ENCODE measurements at regions of chr10 and their contacts with region 1.

Region 1: DNA sequence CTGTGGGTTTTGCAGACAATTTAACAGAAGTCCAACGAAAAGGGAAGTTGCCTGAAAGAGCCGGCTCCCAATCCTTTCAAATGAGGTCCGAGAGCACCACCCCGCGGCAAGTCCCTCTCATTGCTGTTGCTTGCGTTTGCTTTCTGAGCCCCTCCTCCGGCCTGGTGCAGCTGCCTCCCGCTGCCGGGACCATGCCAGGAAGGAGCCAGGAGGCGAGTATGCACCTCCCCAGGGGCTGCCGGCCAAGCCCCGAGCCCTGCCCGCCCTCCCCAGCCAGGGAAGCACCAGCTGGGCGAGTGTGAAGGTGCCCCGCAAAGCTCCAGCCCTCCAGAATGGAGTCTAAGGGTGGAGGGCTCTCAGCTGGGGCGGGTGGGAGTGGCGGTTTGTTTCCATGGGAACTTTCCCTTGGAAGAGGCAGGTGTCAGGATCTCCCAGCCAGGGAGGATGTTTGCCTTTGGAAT is 25.8 kb upstream of the PPP2R2D start:
- ATAC-seq: peak; percentile 76 to 91 (median 88)
- H3K4me3 ChIP-seq: peak overlapping the region in 2 of 5 donors; percentile 13 to 19
- H3K27ac ChIP-seq: no peak overlapping the region
- H3K4me1 ChIP-seq: peaks cover 2 to 8% of the 10 kb centered on the region in 2 donors

Region 2: GRCh38 chr10:130190055-130190736 is 1684.8 kb before region 1 on chr10:
- in situ Hi-C with region 1: loop called in 6 of 9 experiments (anchors 25 kb)
- ATAC-seq: peak; percentile 80 to 93 (median 91)
- H3K4me3 ChIP-seq: peak overlapping the region; percentile 29 to 48 (median 47)
- H3K27ac ChIP-seq: no peak overlapping the region
- H3K4me1 ChIP-seq: peaks cover 0 to 4% of the 10 kb centered on the region in 2 donors

Region 3: GRCh38 chr10:130686689-130687300 is 1188.2 kb before region 1 on chr10:
- in situ Hi-C with region 1: loop called in 1 of 9 experiments (anchors 25 kb)
- ATAC-seq: peak in 5 of 8 experiments; percentile 26 to 89 (median 66)
- H3K4me3 ChIP-seq: no peak overlapping the region
- H3K27ac ChIP-seq: no peak overlapping the region
- H3K4me1 ChIP-seq: peaks cover 0 to 6% of the 10 kb centered on the region in 2 donors

Region 4: GRCh38 chr10:131354380-131354779 is 520.6 kb before region 1 on chr10:
- in situ Hi-C with region 1: loop called in 1 of 9 experiments (anchors 25 kb)
- ATAC-seq: no peak
- H3K4me3 ChIP-seq: no peak overlapping the region
- H3K27ac ChIP-seq: no peak overlapping the region
- H3K4me1 ChIP-seq: peaks cover 0 to 21% of the 10 kb centered on the region in 2 donors